Activated CD4-positive, alpha-beta memory T cell treated with anti-CD3 and anti-CD28 coated beads, Interleukin-2, amount 10 ng/mL, durations not matched to agents 7 days and 5 days (primary cell): ENCODE measurements at regions of chr12 and their contacts with region 1.

Region 1: DNA sequence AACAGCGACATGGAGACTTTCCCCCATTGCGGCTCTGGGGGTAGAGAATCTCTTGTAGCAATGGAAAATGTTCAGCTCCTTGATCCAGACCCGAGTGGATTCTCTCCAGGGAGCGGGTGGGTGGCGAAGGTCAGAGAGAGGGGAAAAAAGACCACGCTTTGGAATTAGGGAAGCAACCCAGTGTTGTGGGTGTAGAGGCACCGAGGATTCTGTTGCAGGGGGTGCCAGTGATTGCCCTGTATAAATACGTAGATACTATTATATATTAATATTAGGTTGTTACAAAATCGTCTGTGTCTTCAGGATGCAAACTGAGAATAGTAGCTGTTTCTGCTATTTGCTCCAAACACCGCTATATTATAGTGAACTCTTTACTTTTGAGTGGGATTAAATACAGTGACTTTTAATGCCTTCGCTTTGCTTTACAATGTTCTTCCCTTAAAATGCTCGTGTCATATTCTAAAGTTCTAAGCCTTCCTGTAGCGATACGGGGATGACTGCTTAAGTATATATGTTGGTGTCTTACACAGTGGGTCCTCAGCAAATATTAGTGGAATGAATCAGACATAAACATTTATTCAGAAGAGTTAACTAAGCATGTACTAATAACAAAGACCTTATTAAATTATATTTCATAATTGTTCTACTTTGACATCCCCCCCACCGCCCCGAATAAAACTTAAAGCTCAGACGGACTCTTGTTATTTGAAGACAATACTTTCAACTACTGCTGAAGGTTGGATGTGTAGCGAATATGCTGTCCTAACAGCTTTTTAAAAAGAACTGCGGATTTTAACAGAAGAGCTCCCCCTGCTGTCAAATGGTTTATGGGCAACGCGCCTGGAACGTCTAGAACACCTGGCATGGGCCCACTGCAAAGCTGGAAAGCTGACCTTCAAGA is 136.4 kb upstream of the KRAS start:
- DNase-seq: peak; percentile 81
- H3K4me3 Mint-ChIP-seq: peak overlapping the region; percentile 91
- H3K27ac Mint-ChIP-seq: peak overlapping the region; percentile 99
- H3K4me1 Mint-ChIP-seq: peaks cover 58% of the 10 kb centered on the region
- H3K27me3 Mint-ChIP-seq: peaks cover 2% of the 10 kb centered on the region

Region 2: GRCh38 chr12:25195056-25195971 is 191.8 kb before region 1 on chr12 and contains the starts of genes DNAI7 and ETFRF1:
- CTCF ChIA-PET with region 1: interaction called, 16 read pairs
- POLR2A ChIA-PET with region 1: interaction called, 8 read pairs
- DNase-seq: peak; percentile 94
- H3K4me3 Mint-ChIP-seq: peak within 1 kb of the TSS; percentile 94
- H3K27ac Mint-ChIP-seq: peak within 1 kb of the TSS; percentile 76
- H3K4me1 Mint-ChIP-seq: peaks cover 23% of the 10 kb centered on the region
- H3K27me3 Mint-ChIP-seq: no peaks in the 10 kb centered on the region
- total RNA-seq, gene DNAI7: not detected
- total RNA-seq, gene ETFRF1: 10.9 to 11.3 TPM

Region 3: DNA sequence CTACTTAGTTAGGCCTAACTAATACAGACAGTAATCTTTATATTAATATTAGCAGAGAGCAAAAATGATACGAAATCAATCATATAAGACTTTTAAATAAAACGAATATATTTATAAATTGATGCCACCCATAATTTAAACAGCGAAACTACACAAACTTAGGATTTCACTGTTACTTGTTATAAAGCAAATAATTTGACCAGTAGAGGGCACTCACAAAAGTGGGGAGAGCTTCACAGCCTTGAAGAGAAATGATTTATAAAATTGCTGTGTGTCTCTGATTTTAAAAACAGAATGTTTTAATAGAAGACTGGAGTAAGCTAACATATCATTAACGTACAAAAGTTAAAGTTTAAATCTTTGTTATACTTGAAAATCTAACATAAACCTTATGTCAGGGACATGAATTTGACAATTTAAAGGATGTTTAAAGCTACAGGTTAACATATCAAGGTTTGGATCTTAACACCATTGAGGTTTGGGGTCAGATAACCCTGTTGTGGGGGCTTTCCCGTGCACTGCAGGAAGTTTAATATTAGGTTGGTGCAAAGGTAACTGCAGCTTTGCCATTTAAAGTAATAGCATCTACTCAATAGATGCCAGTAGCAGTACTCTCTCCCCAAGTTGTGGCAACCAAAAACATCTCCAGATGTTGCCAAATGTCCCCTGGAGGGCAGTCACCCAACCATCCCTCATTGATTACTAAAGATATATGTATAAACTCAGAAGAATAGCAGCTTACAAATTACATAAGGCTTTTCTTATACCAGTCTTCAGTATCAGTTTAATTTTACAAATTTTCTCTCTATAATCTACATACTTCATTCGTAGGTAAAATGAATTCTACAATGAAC is 145.7 kb before region 1 on chr12:
- CTCF ChIA-PET with region 1: interaction called, 10 read pairs
- POLR2A ChIA-PET with region 1: interaction called, 7 read pairs
- DNase-seq: no peak
- H3K4me3 Mint-ChIP-seq: no peak overlapping the region
- H3K27ac Mint-ChIP-seq: no peak overlapping the region
- H3K4me1 Mint-ChIP-seq: peaks cover 24% of the 10 kb centered on the region
- H3K27me3 Mint-ChIP-seq: no peaks in the 10 kb centered on the region

Region 4: DNA sequence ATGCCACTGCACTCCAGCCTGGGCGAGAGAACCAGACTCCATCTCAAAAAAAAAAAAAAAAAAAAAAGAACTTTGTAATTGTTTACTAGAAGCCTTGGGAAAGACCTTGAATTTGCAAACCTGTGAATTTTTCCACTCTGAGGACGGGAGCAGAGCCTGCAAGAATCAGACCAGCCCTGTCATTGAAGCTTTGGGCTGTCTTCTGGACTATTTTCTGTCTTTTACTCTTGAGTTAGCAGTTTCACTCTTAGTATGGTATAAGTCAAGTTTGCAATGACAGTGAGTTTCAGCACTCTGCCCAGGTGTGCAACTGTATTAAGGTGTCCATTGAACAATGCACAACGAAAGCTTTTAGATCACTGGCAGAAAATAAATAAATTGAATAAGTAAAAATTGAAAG is 54.9 kb before region 1 on chr12:
- CTCF ChIA-PET with region 1: interaction called, 11 read pairs
- POLR2A ChIA-PET with region 1: interaction called, 4 read pairs
- DNase-seq: no peak
- H3K4me3 Mint-ChIP-seq: no peak overlapping the region
- H3K27ac Mint-ChIP-seq: no peak overlapping the region
- H3K4me1 Mint-ChIP-seq: peaks cover 16% of the 10 kb centered on the region
- H3K27me3 Mint-ChIP-seq: peaks cover 20% of the 10 kb centered on the region

Region 5: DNA sequence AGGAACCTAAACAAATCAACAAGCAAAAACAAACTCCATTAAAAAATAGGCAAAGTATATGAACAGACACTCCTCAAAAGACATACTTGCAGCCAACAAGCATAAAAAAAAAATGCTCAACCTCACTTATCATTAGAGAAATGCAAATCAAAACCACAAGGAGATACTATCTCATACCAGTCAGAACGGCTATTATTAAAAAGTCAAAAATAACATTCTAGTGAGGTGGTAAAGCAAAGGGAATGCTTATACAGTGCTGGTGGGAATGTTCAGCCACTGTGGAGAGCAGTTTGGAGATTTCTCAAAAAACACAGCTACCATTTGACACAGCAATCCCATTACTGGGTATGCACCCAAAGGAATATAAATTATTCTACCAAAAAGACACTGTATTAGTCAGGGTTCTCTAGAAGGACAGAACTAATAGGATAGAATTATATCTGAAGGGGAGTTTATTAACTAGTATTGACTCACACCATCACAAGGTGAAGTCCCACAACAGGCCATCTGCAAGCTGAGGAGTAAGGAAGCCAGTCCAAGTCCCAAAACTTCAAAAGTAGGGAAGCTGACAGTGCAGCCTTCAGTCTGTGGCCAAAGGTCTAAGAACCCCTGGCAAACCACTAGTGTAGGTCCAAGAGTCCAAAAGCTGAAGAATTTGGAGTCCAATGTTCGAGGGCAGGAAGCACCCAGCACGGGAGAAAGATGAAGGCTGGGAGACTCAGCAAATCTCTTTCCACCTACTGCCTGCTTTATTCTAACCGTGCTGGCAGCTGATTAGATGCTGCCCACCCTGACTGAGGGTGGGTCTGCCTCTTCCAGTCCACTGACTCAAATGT is 34.8 kb before region 1 on chr12:
- CTCF ChIA-PET with region 1: no interaction called
- POLR2A ChIA-PET with region 1: no interaction called
- DNase-seq: no peak
- H3K4me3 Mint-ChIP-seq: no peak overlapping the region
- H3K27ac Mint-ChIP-seq: no peak overlapping the region
- H3K4me1 Mint-ChIP-seq: peaks cover 12% of the 10 kb centered on the region
- H3K27me3 Mint-ChIP-seq: peaks cover 24% of the 10 kb centered on the region

Region 6: DNA sequence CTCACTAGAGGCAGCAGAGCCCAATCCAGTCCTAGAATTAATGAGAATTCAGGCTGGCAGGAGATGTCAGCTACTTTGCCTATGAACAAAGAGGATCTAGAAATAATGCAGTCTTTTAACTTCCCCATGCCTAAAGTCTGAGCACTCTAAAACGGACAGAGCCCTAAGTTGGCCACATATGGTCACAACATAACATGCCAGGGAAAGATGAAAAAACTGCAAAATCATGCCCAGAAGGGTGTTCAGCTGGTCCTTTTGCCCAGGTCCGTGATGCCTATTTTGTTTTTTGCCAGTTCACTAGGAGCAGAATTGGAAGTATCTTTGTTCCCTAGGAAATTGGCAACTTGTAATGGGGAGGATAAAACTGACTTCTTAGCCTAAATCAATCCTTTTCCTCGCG is 186.3 kb after region 1 on chr12:
- CTCF ChIA-PET with region 1: no interaction called
- POLR2A ChIA-PET with region 1: no interaction called
- DNase-seq: no peak
- H3K4me3 Mint-ChIP-seq: no peak overlapping the region
- H3K27ac Mint-ChIP-seq: no peak overlapping the region
- H3K4me1 Mint-ChIP-seq: no peaks in the 10 kb centered on the region
- H3K27me3 Mint-ChIP-seq: no peaks in the 10 kb centered on the region